A549 (cell line): ENCODE measurements at regions of chr16 and their contacts with region 1.

Region 1: GRCh38 chr16:84175350-84176081 is 11.3 kb downstream of the TAF1C start:
- DNase-seq: peak in 1 of 2 experiments; percentile 55
- ATAC-seq: peak; percentile 69 to 81
- H3K4me3 ChIP-seq: no peak overlapping the region
- H3K27ac ChIP-seq: peak overlapping the region in 1 of 2 experiments; percentile 72; a peak in 2 of 6 replicates
- H3K4me1 ChIP-seq: peaks cover 29% of the 10 kb centered on the region
- CTCF ChIP-seq: peak; percentile 40; the same call in 2 of the 3 replicates
- EP300 ChIP-seq: no peak
- POLR2A ChIP-seq: no peak
- RAD21 ChIP-seq: peak; percentile 53 to 59

Region 2: GRCh38 chr16:84124257-84125073 is 51.1 kb before region 1 on chr16:
- CTCF ChIA-PET with region 1: no interaction called
- POLR2A ChIA-PET with region 1: no interaction called
- DNase-seq: no peak
- ATAC-seq: no peak
- H3K4me3 ChIP-seq: no peak overlapping the region
- H3K27ac ChIP-seq: no peak overlapping the region
- H3K4me1 ChIP-seq: no peaks in the 10 kb centered on the region
- CTCF ChIP-seq: no peak
- EP300 ChIP-seq: no peak
- POLR2A ChIP-seq: no peak
- RAD21 ChIP-seq: no peak

Region 3: GRCh38 chr16:84156342-84156784 is 19.2 kb before region 1 on chr16:
- CTCF ChIA-PET with region 1: interaction called, 11 read pairs
- POLR2A ChIA-PET with region 1: no interaction called
- DNase-seq: no peak
- ATAC-seq: peak in 1 of 2 experiments; percentile 65; a peak in 2 of 6 replicates
- H3K4me3 ChIP-seq: no peak overlapping the region
- H3K27ac ChIP-seq: no peak overlapping the region
- H3K4me1 ChIP-seq: no peaks in the 10 kb centered on the region
- CTCF ChIP-seq: no peak
- EP300 ChIP-seq: no peak
- POLR2A ChIP-seq: no peak
- RAD21 ChIP-seq: no peak

Region 4: GRCh38 chr16:84284154-84284722 is 108.7 kb after region 1 on chr16:
- CTCF ChIA-PET with region 1: no interaction called
- POLR2A ChIA-PET with region 1: no interaction called
- DNase-seq: no peak
- ATAC-seq: peak; percentile 43 to 69; a peak in 3 of 6 replicates
- H3K4me3 ChIP-seq: no peak overlapping the region
- H3K27ac ChIP-seq: 0 out of 6 replicates have a peak overlapping the region, but pooled peaks of 1 of the 2 experiments have one; percentile 7
- H3K4me1 ChIP-seq: 0 out of 3 replicates have a peak, but pooled peaks cover 5% of the 10 kb centered on the region
- CTCF ChIP-seq: no peak
- EP300 ChIP-seq: no peak
- POLR2A ChIP-seq: no peak
- RAD21 ChIP-seq: no peak